Right ventricle myocardium inferior (tissue), 1 donor: ENCODE measurements at regions of chr3 and their contacts with region 1.

Region 1: DNA sequence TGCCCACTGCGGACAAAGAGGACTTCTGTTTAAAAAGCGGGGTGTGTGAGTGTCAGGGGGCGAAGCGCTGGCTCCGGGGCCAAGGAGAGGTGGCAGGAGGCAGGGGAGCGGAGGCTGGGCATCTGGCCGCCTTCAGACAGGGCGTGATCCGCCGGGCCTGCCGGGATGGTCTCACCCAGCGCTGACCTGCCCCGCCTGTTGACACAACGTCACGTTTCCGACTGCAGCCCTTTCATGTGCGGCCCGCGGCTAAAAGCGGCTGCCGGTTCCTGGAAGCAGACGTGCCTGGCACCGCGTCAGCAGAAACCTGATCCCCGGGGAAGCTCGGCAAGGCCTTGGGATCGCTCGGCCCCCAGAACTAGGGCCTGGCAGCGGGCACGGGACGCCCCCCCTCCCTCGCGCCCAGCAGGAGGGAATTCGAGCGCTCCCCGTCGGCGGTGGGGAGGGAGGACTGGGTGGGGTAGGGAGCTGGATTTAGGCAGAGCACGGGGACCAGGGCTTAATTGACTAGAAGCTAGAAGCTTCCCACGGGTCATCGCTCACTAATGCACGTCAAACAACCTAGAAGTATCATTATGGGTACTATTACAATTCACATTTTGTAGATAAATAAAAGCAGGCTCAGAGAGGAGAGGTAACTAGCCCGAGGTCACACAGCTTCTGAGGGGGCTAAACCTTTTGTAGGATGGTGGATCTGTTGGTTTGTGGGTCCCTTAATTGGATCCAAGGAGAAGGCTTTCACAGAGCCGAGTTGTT is 7.7 kb downstream of the BHLHE40 start:
- DNase-seq: peak; percentile 97
- ATAC-seq: peak; percentile 90

Region 2: DNA sequence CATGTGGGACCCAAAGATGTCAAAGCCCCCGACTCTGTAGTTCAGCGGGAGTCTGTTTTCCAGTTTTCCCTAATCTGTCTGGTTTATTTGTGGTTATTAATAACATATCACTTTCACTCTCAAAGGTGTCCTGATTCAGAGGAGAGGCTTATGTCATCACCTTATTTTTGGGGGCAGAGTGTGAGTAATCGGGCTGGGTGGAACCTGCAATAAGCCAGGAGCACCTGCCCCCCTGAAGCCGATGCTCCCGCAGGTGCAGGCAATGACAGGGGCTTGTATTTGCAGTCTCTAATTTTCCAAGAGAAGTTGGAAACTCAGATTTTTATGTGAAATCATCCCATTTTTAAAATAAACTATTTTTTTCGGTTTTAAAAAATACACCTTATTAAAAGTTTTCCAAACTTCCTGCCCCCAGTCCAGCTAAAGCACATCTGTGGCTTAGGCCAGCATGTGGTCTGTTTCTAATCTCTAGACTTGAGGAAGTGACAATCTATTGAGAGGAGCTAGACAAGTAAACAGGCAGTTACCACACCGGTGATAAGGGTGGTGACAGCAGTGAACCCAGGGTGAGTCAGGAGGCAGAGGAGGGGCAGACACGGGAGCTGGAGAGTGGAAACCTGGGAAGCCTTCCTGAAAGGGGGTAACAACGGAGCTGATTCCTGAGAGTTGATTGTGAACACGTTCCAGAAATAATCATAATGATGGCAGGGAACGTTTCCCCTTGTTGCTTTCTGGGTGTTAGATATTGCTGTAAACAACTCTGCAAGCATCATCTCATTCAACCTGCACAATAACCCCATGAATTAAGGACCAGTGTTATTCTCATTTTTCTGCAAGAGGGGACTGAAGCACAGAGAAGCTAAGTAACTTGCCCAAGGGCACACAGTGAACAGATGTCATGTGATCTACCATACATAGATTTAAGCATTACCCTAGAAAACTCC is 29.5 kb after region 1 on chr3:
- intact Hi-C with region 1: loop called (anchors 2 kb)
- DNase-seq: no peak
- ATAC-seq: peak; percentile 56

Region 3: DNA sequence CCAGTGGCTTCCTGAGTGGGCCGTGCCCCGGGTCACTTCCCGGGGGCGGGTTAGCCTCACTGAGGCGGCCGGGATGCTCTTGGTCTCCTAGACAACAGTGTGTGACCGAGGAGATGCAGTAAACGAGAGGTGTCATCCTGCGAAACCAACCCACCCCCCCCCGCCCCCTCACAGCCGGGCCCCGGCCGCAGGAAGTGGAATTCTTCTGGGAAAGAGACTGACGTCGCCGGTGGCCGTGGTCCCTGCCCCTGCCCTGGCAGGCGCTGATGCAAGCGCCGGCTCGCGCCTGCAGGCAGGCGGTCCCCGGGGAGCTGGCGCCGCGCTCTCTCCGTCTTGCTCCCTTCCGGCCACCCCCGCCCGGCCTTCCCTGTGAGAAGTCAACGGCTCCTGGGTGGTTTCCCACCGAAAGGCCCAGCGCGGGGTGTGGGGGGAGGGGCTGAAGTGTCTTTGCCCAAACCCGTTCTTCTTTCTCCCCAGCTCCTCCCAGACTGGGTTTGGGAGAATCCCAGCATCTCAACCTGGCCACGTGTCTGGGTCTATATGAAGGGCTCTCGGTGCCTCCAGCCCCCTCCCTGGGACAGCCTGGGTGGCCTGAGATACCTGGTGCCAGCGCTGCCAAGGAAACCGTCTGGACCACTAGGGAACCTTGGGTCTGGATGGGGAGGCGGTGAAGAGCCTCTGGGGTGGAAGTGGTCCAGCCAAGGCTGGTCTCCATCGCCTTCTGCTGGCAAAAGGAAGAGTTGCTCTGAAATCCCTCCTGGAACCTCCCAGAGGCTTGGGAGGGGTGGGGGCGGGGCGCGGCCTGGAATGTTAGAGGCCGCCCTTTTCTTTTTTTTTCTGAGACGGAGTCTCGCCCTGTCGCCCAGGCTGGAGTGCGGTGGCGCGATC is 39.6 kb after region 1 on chr3:
- intact Hi-C with region 1: loop called (anchors 2 kb)
- DNase-seq: peak; percentile 93
- ATAC-seq: peak; percentile 94